ENCODE measurements at regions of chr2 and their contacts with region 1.

Region 1: DNA sequence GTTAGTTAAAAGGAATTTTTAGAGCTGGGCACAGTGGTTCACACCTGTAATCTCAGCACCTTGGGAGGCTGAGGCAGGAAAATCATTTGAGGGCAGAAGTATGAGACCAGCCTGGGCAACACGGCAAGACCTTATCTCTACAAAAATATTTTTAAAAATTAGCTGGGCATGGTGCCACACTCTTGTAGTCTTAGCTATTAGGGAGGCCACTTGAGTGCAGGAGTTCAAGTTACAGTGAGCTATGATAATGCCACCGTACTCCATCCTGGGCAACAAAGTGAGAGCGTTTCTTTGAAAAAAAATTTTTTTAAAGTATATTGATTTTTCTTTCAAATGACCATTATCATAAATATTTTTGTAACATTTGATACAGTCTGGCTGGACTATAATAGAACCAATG is 93.6 kb upstream of the FAM117B start:
- DNase-seq: no peak
- ATAC-seq: no peak
- H3K4me3 ChIP-seq: no peak overlapping the region
- H3K4me3 Mint-ChIP-seq: no peak overlapping the region
- H3K27ac ChIP-seq: no peak overlapping the region
- H3K27ac Mint-ChIP-seq: no peak overlapping the region
- H3K4me1 ChIP-seq: no peaks in the 10 kb centered on the region
- H3K4me1 Mint-ChIP-seq: no peaks in the 10 kb centered on the region
- H3K27me3 ChIP-seq: no peaks in the 10 kb centered on the region
- H3K27me3 Mint-ChIP-seq: no peaks in the 10 kb centered on the region

Region 2: DNA sequence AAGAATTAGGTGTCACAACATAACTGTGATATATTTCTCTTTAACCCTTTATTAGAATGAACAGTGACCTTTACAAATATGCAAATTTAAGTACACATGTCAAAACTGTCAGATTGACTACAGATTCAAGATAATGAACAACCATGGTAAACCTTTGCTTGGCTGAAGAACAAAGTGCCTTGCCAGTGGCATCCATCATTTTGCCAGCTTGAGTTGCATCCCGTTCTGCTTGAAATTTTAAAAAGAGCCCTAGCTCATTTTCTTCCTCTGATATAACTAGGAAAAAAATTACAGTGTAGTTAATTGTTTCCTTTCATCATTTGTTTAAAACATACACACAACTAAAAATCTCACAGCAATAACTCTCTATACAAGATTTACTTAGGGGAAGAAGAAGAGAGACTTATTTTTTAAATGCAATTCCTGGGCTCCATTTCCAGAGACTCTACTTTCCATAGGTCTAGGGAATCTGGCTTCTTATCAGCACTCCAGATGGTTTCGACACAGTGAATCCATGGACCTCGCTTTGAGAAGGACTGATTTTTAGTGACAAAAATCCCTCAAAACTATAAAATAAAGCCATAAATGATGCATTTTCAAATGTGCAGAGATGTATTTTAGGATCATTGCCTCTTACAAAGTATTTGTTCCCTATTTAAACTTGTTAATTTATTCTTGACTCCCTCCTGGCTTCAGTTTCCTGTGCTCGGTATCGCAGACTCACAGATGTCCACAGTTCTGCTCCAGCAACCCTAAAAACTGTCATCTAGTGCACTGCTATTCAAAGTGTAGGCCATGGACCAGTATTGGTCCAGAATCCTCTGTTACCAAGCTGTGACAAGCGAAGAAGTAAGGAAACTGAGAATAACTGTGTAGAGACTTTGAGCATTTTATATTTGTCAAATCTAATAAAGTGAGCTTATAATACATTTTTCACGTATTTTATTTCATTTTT is 280.3 kb after region 1 on chr2:
- CTCF ChIA-PET with region 1: no interaction called
- POLR2A ChIA-PET with region 1: interaction called in 1 of 2 experiments, 12 read pairs
- DNase-seq: no peak
- ATAC-seq: no peak
- H3K4me3 ChIP-seq: no peak overlapping the region
- H3K4me3 Mint-ChIP-seq: no peak overlapping the region
- H3K27ac ChIP-seq: no peak overlapping the region
- H3K27ac Mint-ChIP-seq: no peak overlapping the region
- H3K4me1 ChIP-seq: no peaks in the 10 kb centered on the region
- H3K4me1 Mint-ChIP-seq: no peaks in the 10 kb centered on the region
- H3K27me3 ChIP-seq: no peaks in the 10 kb centered on the region
- H3K27me3 Mint-ChIP-seq: no peaks in the 10 kb centered on the region

Region 3: GRCh38 chr2:204251158-204251997 is 1710.2 kb after region 1 on chr2:
- CTCF ChIA-PET with region 1: no interaction called
- POLR2A ChIA-PET with region 1: interaction called in 1 of 2 experiments, 10 read pairs
- DNase-seq: no peak
- ATAC-seq: no peak
- H3K4me3 ChIP-seq: no peak overlapping the region
- H3K4me3 Mint-ChIP-seq: no peak overlapping the region
- H3K27ac ChIP-seq: no peak overlapping the region
- H3K27ac Mint-ChIP-seq: no peak overlapping the region
- H3K4me1 ChIP-seq: no peaks in the 10 kb centered on the region
- H3K4me1 Mint-ChIP-seq: no peaks in the 10 kb centered on the region
- H3K27me3 ChIP-seq: peaks cover 0 to 11% of the 10 kb centered on the region in 2 experiments
- H3K27me3 Mint-ChIP-seq: peaks cover 10 to 13% of the 10 kb centered on the region in 2 donors